ENCODE measurements at regions of chr20 and their contacts with region 1.

Region 1: GRCh38 chr20:45934586-45935415 is at the start of gene PCIF1:
- DNase-seq: peak; percentile 99
- ATAC-seq: peak; percentile 84
- H3K4me3 Mint-ChIP-seq: peak within 1 kb of the TSS; percentile 97
- H3K27ac Mint-ChIP-seq: peak within 1 kb of the TSS; percentile 99
- H3K4me1 Mint-ChIP-seq: peaks cover 27% of the 10 kb centered on the region
- H3K27me3 Mint-ChIP-seq: no peaks in the 10 kb centered on the region
- total RNA-seq, gene PCIF1: 24.0 to 27.4 TPM

Region 2: GRCh38 chr20:45798935-45799642 is 135.7 kb before region 1 on chr20:
- CTCF ChIA-PET with region 1: no interaction called
- POLR2A ChIA-PET with region 1: interaction called, 4 read pairs
- intact Hi-C with region 1: loop called in 1 of 2 experiments (anchors 2 kb)
- DNase-seq: peak; percentile 79
- ATAC-seq: peak; percentile 95
- H3K4me3 Mint-ChIP-seq: no peak overlapping the region
- H3K27ac Mint-ChIP-seq: peak overlapping the region; percentile 45
- H3K4me1 Mint-ChIP-seq: peaks cover 7% of the 10 kb centered on the region
- H3K27me3 Mint-ChIP-seq: no peaks in the 10 kb centered on the region

Region 3: GRCh38 chr20:45857114-45857881 is 77.5 kb before region 1 on chr20 and contains the starts of genes ACOT8 and ZSWIM3:
- CTCF ChIA-PET with region 1: interaction called, 3 read pairs
- POLR2A ChIA-PET with region 1: interaction called, 4 read pairs
- intact Hi-C with region 1: loop called (anchors 1 kb)
- DNase-seq: peak; percentile 95
- ATAC-seq: peak; percentile 97
- H3K4me3 Mint-ChIP-seq: peak within 1 kb of the TSS; percentile 93
- H3K27ac Mint-ChIP-seq: peak within 1 kb of the TSS; percentile 99
- H3K4me1 Mint-ChIP-seq: peaks cover 38% of the 10 kb centered on the region
- H3K27me3 Mint-ChIP-seq: no peaks in the 10 kb centered on the region
- total RNA-seq, gene ACOT8: 21.9 to 22.6 TPM
- total RNA-seq, gene ZSWIM3: 4.2 to 4.8 TPM

Region 4: DNA sequence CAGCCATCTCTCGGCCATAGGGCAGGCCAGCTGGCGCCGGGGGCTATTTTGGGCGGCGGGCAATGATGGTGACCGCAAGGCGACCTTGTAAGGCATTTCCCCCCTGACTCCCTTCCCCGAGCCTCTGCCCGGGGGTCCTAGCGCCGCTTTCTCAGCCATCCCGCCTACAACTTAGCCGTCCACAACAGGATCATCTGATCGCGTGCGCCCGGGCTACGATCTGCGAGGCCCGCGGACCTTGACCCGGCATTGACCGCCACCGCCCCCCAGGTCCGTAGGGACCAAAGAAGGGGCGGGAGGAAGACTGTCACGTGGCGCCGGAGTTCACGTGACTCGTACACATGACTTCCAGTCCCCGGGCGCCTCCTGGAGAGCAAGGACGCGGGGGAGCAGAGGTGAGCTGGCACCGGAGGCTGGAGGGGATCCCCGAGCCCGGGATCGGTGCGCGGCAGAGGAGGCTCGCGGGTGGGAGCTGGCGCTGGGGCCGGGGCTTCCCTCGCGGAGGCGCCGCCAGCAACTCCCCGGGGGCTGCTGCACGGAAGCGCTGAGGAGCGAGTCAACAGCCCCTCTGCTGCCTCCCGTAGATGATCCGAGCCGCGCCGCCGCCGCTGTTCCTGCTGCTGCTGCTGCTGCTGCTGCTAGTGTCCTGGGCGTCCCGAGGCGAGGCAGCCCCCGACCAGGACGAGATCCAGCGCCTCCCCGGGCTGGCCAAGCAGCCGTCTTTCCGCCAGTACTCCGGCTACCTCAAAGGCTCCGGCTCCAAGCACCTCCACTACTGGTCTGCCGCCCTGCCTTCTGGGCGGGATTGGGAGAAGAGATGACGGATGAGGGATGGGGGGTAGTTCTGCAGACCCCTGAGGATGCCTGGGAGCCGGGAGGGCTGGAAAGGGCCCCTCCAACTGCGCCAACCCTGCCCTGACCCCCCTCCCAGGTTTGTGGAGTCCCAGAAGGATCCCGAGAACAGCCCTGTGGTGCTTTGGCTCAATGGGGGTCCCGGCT is 43.5 kb before region 1 on chr20 and contains the starts of genes CTSA and NEURL2:
- CTCF ChIA-PET with region 1: interaction called, 7 read pairs
- POLR2A ChIA-PET with region 1: interaction called, 3 read pairs
- intact Hi-C with region 1: loop called (anchors 1 to 2 kb)
- DNase-seq: peak; percentile 94
- ATAC-seq: peak; percentile 80
- H3K4me3 Mint-ChIP-seq: peak within 1 kb of the TSS; percentile 89
- H3K27ac Mint-ChIP-seq: peak within 1 kb of the TSS; percentile 87
- H3K4me1 Mint-ChIP-seq: peaks cover 32% of the 10 kb centered on the region
- H3K27me3 Mint-ChIP-seq: no peaks in the 10 kb centered on the region
- total RNA-seq, gene CTSA: 36.4 to 45.6 TPM
- total RNA-seq, gene NEURL2: 1.2 to 1.9 TPM

Region 5: DNA sequence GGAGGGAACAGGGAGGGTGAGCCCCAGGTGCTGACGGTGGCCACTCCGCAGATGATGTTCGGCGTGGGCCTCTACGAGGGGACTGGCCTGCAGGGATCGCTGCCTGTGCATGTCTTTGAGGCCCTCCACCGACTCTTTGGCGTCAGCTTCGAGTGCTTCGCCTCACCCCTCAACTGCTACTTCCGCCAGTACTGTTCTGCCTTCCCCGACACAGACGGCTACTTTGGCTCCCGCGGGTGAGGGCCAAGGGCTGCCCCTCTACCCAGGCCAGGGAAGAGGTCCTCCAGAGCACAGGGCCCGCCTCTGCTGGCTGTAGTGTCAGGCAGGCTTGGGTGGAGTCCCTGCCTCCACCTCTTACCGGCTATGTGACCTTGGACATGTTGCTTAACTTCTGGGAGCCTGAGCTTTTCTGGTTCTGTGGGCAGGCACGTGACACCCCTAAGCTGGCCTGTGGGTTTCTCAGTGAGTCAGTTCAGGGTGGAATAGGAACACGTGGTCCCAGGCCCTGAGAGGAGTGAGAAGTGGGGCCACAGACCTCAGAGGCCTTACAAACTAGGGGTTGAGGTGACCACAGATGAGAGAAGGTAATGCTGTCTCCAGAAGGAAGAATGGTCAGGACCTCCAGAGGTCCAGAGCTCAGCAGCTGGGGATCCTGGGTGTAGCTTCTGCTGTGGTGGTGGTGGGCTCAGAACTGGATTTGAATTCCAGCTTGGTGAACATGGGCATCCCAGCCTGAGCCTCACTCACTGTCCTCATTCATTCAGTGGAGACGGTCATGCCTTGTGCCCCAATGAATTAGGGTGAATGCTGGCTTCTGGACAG is 11.6 kb after region 1 on chr20:
- CTCF ChIA-PET with region 1: interaction called, 7 read pairs
- POLR2A ChIA-PET with region 1: interaction called, 11 read pairs
- intact Hi-C with region 1: no loop called
- DNase-seq: peak; percentile 57
- ATAC-seq: peak; percentile 62
- H3K4me3 Mint-ChIP-seq: no peak overlapping the region
- H3K27ac Mint-ChIP-seq: peak overlapping the region; percentile 29
- H3K4me1 Mint-ChIP-seq: peaks cover 16% of the 10 kb centered on the region
- H3K27me3 Mint-ChIP-seq: no peaks in the 10 kb centered on the region

Region 6: GRCh38 chr20:46031701-46032254 is 97.0 kb after region 1 on chr20:
- CTCF ChIA-PET with region 1: no interaction called
- POLR2A ChIA-PET with region 1: no interaction called
- intact Hi-C with region 1: no loop called
- DNase-seq: peak; percentile 24
- ATAC-seq: no peak
- H3K4me3 Mint-ChIP-seq: no peak overlapping the region
- H3K27ac Mint-ChIP-seq: no peak overlapping the region
- H3K4me1 Mint-ChIP-seq: no peaks in the 10 kb centered on the region
- H3K27me3 Mint-ChIP-seq: peaks cover 49% of the 10 kb centered on the region

Region 7: DNA sequence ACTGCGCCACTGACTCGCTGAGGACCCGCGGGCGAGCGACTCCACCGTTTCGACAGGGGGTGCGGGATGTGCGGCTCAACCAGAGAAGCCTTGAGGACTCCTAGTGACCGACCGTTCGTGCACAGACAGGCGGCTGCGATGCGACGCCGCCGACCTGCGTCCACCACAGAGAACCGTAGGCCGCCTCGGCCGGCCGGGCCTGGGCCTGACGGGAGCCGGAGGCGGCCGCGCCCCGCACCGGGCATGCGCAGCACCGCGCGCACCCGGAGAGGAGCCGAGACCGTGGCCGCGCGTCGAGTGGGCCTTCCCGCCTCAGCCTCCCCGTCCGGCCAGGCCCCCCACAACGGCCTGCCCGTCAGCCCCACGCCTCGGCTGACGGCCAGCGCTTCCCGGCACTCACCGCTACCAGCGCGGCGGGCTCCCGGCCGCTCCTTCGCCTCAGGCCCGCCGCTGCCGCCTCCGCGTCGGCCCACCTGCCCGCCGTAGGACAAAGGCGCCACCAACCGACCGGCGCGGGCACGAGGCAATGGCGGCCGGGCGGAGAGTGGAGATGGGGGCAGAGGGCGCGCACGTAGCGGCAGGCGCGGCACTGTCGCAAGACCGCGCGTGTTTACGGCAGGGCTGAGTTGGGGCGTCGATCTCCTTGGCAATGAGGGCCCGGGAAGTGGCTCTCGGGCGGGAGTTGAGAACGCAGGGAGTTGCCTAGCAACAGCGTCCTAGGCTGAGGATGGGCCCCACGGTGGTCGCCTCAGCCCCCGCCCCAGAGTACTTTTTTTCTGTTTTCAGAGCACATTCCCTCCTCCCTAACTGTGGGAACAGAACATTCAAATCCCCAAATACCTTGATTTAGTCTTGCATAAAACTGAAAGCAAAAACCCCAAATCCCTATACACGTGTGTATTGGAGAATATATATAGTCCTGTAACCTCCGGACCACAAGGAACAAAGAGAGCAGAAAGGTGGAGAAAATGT is 154.9 kb after region 1 on chr20 and contains the start of gene NCOA5:
- CTCF ChIA-PET with region 1: no interaction called
- POLR2A ChIA-PET with region 1: interaction called, 3 read pairs
- intact Hi-C with region 1: loop called in 1 of 2 experiments (anchors 1 kb)
- DNase-seq: peak; percentile 97
- ATAC-seq: peak; percentile 87
- H3K4me3 Mint-ChIP-seq: peak within 1 kb of the TSS; percentile 86
- H3K27ac Mint-ChIP-seq: peak within 1 kb of the TSS; percentile 88
- H3K4me1 Mint-ChIP-seq: peaks cover 46% of the 10 kb centered on the region
- H3K27me3 Mint-ChIP-seq: no peaks in the 10 kb centered on the region
- total RNA-seq, gene NCOA5: 17.9 to 18.8 TPM